Right ventricle myocardium inferior (tissue), 1 donor: ENCODE measurements at regions of chr2 and their contacts with region 1.

Region 1: GRCh38 chr2:28311660-28312249 is 80.9 kb upstream of the FOSL2 start:
- DNase-seq: no peak
- ATAC-seq: peak; percentile 53

Region 2: GRCh38 chr2:28325567-28326468 is 14.1 kb after region 1 on chr2:
- intact Hi-C with region 1: loop called (anchors 2 kb)
- DNase-seq: no peak
- ATAC-seq: no peak